ENCODE measurements at regions of chr16 and their contacts with region 1.

Region 1: DNA sequence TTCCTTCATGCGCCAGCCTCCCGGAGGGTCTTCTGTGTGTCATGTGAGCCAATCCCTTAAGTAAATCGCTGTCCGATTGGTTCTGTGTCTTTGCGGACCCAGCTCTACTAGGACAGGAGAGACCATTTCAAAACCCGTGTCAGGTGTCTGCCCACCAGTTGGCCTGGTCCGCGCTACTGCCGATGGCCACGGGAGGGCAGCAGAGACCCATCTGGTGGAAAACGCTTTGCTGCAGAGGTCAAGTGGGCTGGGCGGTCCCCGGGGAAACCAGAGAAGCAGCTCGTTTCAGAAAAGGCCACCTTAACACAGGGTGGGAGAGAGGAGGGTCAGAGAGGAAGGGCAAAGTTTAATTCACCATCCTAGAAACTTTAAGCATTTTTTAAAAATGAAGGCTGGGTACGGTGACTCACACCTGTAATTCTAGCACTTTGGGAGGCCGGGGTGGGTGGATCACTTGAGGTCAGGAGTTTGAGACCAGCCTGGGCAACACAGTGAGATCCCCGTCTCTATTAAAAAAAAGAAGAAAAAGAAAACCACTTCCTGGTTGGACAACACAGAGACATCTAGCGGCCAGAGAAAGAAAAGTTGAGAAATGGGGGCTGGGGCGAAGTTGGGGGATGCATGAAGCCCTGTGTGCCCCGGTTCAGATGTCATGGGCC is 2.8 kb upstream of the CIBAR2 start:
- DNase-seq: peak; percentile 92
- H3K4me3 Mint-ChIP-seq: peak overlapping the region; percentile 55
- H3K27ac Mint-ChIP-seq: peak overlapping the region; percentile 68
- H3K4me1 Mint-ChIP-seq: peaks cover 10% of the 10 kb centered on the region
- H3K27me3 Mint-ChIP-seq: no peaks in the 10 kb centered on the region

Region 2: DNA sequence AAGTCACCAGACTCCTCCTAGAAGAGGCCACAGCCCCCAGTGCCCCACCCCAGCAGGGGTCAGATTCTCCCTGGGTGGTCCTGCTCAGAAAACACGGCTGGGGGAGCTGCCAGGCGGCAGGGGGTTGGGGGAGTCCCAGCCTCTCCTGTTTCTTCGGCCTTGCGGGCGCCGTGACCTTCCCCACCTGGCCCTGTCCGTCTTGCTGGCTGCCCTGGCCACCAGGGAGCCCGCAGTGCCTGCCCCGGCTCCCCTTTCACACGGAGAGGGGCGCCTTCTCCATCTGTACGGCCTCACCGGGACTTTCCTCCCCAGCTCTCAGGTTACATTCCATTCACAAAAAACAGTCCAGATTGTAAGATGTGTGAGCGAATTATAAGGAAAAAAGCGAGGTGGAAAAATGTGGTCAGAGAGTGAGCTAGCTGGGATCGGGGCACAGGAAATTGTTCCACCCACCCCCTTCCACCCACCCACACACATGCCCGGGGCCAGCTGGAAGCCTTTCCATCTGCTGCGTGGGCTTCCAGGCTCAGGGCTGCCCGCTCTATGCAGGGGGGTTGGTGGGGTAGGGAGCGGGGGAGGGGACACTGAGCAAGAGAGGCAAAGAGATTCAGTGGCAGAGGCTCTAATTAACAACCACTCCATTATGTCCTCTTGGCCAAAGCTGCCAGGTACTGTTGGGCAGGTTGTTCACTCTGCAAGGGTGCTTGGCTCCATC is 11.8 kb after region 1 on chr16:
- CTCF ChIA-PET with region 1: interaction called, 22 read pairs
- intact Hi-C with region 1: no loop called
- DNase-seq: peak; percentile 32
- H3K4me3 Mint-ChIP-seq: no peak overlapping the region
- H3K27ac Mint-ChIP-seq: peak overlapping the region; percentile 18
- H3K4me1 Mint-ChIP-seq: peaks cover 14% of the 10 kb centered on the region
- H3K27me3 Mint-ChIP-seq: no peaks in the 10 kb centered on the region

Region 3: DNA sequence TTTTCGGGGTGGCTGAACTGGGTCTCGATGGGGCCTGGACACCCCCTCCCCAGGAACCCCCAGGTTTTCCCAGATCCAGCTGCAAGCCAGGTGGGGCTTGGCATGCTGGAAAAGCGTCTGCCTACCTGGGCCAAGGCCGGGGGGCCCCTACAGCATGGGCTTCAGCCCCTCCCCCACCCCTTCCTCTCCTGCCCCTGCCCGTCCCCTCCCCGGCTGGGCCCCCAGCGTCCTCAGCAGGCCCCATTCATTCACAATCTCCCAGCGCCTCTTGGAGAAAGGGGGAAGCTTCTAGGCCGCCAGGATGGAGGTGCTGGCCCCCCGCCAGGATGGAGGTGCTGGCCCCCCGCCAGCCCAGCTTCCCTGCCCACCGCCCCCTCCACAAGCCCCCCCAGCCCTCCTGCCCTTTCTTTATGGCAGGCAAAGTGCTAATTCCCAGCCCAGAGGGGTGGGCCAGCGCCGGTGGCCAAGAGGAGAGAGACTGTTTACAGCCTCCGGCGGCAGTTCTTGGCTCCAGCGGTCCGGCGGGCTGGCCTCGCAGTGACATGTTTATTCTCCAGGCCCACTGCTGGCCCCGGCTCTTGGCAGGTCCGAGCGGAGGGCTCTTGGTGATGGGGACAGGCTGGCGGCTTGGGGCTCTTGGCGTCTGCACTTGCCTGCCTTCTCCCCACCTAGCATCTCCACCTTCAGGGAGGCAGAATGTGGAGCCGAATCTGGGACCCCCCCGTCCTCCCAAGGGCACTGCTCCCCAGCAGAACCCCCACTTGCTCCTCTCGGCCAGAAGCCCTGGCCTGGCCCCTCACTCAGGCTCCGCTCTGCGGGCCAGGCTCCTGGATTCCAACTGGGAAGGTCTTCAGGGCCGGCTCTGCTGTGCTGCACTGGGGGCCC is 91.7 kb after region 1 on chr16:
- CTCF ChIA-PET with region 1: no interaction called
- intact Hi-C with region 1: no loop called
- DNase-seq: no peak
- H3K4me3 Mint-ChIP-seq: no peak overlapping the region
- H3K27ac Mint-ChIP-seq: no peak overlapping the region
- H3K4me1 Mint-ChIP-seq: no peaks in the 10 kb centered on the region
- H3K27me3 Mint-ChIP-seq: peaks cover 2% of the 10 kb centered on the region

Region 4: DNA sequence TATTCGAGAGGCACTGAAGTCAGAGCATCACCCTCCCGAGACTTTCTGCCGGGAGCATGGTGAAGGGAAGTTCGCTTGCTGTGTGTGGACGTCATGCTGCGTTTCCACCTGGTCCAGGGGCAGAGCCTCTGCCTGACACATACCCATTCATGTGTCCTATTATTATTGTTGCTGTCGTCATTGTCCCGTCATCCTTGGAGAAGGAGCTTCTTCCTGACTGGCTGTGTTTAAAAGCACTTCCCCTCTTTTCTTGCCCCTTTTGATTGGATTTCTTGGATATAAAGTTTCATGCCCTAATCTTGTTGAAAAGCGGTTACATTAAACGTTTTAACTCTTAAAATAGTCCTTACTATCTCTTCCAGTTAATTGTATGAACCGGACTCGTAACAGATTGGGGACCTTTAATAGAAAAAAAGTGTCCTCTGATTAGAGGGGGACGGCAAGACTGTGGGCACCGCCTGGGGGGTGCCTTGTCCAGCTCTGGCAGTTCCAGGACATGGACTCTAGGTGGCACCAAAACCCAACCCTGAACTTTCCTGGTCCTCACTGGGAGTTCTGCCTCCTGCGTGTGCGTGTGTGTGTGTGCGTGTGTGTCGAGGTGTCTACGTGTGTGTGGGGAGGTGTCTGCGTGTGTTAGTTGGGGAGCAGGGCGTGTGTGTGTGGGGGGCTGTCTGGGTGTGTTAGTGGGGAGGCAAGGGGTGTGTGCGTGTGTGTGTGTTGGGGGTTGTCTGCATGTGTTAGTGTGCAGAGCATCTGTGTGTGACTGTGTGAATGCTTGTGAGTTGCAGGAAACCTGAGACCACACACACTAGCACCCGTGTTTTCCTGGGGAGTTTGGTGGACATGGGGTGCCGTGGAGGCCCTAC is 130.5 kb after region 1 on chr16:
- CTCF ChIA-PET with region 1: no interaction called
- intact Hi-C with region 1: loop called (anchors 5 kb)
- DNase-seq: peak; percentile 61
- H3K4me3 Mint-ChIP-seq: no peak overlapping the region
- H3K27ac Mint-ChIP-seq: no peak overlapping the region
- H3K4me1 Mint-ChIP-seq: peaks cover 6% of the 10 kb centered on the region
- H3K27me3 Mint-ChIP-seq: peaks cover 6% of the 10 kb centered on the region